Dendritic cell treated with granulocyte-macrophage colony-stimulating factor and Interleukin-4, amounts not matched to agents 40 ng/mL and 50 ng/mL, for 4 days (primary cell): ENCODE measurements at regions of chr19 and their contacts with region 1.

Region 1: GRCh38 chr19:51830274-51830673 is 35.3 kb downstream of the FPR3 start:
- H3K4me3 Mint-ChIP-seq: peak overlapping the region; percentile 1
- H3K27ac Mint-ChIP-seq: peak overlapping the region; percentile 66
- H3K4me1 Mint-ChIP-seq: peaks cover 79% of the 10 kb centered on the region
- H3K27me3 Mint-ChIP-seq: no peaks in the 10 kb centered on the region

Region 2: DNA sequence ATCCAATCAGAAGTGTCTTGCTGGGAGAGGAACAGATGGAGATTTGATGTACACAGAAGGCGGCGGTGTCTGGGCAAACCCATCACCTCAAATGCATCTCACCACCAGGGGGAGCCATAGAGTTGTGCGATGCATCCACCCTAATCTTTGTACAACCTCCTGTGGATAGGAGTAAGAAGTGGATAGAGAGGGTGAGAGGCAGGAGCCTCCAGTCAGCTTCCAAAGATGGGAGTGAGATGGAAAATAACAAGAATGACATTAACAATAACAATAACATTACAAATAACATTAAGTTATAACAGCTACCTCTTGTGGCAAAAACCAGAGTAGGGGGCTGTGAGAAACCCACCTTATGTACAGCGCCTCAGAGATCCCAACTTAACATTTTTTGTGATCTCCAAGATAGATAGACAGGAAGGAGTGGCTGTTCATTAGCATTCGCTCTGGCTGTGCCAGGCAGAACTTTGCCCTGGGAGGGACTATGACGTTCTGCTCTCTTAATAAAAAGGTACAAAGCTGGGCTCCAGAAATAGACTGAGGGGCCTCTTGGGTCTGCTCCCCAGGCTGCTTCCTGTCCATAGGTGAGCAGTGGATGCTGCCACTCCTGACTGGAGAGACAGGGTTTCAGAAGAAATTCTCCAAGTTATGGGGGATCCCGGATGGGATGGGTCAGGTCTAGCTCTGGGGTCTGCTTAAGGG is 357.1 kb before region 1 on chr19:
- intact Hi-C with region 1: loop called (anchors 10 kb)
- H3K4me3 Mint-ChIP-seq: no peak overlapping the region
- H3K27ac Mint-ChIP-seq: no peak overlapping the region
- H3K4me1 Mint-ChIP-seq: peaks cover 23% of the 10 kb centered on the region
- H3K27me3 Mint-ChIP-seq: peaks cover 20% of the 10 kb centered on the region

Region 3: DNA sequence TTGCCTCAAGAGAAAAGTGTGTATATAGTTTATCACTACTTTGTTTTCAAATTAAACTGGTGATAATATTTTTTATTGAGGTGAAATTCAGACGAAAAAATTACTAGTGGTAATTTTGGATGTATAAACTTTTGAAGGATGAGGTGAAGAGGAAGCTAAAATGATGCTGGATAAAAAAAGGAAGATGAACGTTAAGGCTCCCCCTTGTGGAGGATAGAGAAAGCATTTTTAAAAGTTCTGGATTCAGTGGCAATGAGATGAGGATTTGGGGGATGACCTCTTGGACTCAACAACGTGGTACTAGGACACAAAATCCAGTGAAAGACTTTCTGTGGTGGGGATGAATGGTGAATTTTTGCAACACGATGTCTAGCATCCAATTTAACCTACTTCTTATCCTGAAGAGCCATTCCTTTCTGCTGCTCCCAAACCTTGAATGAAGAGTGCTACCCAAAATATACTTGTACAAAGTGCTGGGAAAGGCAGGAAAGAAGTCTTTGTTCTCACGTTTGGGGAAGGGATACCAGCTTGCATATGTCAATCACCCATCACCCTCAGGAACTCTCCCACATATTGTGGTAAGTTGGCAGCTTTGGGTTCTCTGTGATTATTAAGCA is 192.8 kb before region 1 on chr19:
- intact Hi-C with region 1: no loop called
- H3K4me3 Mint-ChIP-seq: no peak overlapping the region
- H3K27ac Mint-ChIP-seq: no peak overlapping the region
- H3K4me1 Mint-ChIP-seq: peaks cover 6% of the 10 kb centered on the region
- H3K27me3 Mint-ChIP-seq: no peaks in the 10 kb centered on the region

Region 4: DNA sequence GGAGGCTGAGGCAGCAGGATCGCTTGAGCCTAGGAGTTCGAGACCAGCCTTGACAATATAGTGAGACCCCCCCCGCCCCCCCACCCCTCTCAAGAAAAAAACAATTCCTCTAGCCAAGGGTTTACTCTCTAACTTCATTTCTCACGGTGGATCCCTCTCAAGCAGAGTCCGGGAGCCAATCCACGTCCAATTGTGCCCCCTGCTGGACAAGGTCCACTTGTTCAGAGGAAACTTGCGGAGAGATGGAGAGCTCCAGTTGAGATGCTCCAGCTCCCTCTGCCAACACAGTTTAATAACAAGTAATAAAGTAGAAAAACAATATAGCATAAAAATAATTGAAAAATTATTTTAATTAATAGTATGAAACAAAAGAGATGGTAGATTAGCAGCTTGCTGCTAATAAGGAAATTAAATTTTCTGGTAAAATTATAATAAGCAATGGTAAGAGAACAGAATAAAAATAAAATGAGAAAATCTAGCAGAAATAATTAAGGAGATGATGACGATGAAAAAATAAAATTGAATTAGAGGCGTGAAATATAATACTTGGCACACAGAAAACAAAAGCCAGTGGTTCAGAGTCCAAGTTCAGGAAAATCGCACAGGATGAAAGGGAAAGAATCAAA is 169.2 kb before region 1 on chr19:
- intact Hi-C with region 1: loop called (anchors 5 kb)
- H3K4me3 Mint-ChIP-seq: no peak overlapping the region
- H3K27ac Mint-ChIP-seq: no peak overlapping the region
- H3K4me1 Mint-ChIP-seq: peaks cover 36% of the 10 kb centered on the region
- H3K27me3 Mint-ChIP-seq: peaks cover 51% of the 10 kb centered on the region

Region 5: GRCh38 chr19:51777570-51778462 is 52.5 kb before region 1 on chr19:
- intact Hi-C with region 1: loop called (anchors 2 kb)
- H3K4me3 Mint-ChIP-seq: no peak overlapping the region
- H3K27ac Mint-ChIP-seq: peak overlapping the region; percentile 39
- H3K4me1 Mint-ChIP-seq: peaks cover 70% of the 10 kb centered on the region
- H3K27me3 Mint-ChIP-seq: peaks cover 9% of the 10 kb centered on the region

Region 6: DNA sequence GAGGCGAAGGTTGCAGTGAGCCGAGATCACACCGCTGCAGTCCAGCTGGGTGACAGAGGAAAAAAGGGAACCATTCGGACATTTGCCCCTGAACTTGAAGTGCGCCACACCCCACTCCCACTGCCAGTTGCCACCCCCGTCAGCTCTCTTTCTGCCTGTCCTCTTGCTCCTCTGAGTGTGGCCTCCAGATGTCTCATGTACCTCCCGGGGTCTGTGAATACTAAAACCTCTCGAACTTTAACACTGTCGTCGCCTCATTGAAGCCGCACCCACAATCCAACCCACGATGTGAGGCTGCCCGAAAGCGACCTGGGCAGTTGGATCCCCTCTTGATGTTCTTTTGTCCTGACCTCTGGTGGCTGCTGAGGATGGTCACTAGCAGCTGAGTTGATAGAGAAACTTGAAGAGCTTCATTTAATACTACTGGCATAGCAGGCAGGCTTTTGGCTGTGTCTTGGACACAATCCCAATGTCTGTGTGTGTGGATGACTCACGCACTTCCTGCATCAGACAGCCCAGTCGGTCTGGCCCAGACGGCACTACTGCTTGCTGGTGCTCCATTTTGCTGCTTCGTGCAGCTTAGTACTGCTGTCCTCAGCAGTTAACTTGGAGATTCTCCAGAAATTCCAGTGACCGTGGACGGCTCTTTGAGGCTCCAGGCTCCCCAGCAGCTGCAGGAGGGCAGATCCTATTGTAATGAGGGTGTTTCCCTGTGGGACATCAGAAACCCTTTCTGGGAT is 31.1 kb before region 1 on chr19:
- intact Hi-C with region 1: loop called (anchors 5 kb)
- H3K4me3 Mint-ChIP-seq: peak overlapping the region; percentile 96
- H3K27ac Mint-ChIP-seq: peak overlapping the region; percentile 95
- H3K4me1 Mint-ChIP-seq: peaks cover 67% of the 10 kb centered on the region
- H3K27me3 Mint-ChIP-seq: no peaks in the 10 kb centered on the region

Region 7: GRCh38 chr19:52237771-52238400 is 407.6 kb after region 1 on chr19:
- intact Hi-C with region 1: loop called (anchors 10 kb)
- H3K4me3 Mint-ChIP-seq: no peak overlapping the region
- H3K27ac Mint-ChIP-seq: no peak overlapping the region
- H3K4me1 Mint-ChIP-seq: peaks cover 13% of the 10 kb centered on the region
- H3K27me3 Mint-ChIP-seq: peaks cover 1% of the 10 kb centered on the region